CD4-positive, alpha-beta memory T cell (primary cell): ENCODE measurements at regions of chr11 and their contacts with region 1.

Region 1: GRCh38 chr11:17077520-17078401 is at the start of gene RPS13:
- DNase-seq: peak; percentile 90 to 96 (median 94)
- H3K4me3 ChIP-seq: peak within 1 kb of the TSS; percentile 93 to 94
- H3K4me3 Mint-ChIP-seq: peak within 1 kb of the TSS; percentile 95 to 99 (median 99)
- H3K27ac ChIP-seq: peak within 1 kb of the TSS; percentile 87
- H3K27ac Mint-ChIP-seq: peak within 1 kb of the TSS; percentile 96 to 99 (median 98)
- H3K4me1 ChIP-seq: peaks cover 39% of the 10 kb centered on the region
- H3K4me1 Mint-ChIP-seq: peaks cover 17 to 53% (median 38%) of the 10 kb centered on the region in 4 donors
- H3K27me3 ChIP-seq: no peaks in the 10 kb centered on the region
- H3K27me3 Mint-ChIP-seq: no peaks in the 10 kb centered on the region
- total RNA-seq, gene RPS13: 2,047 to 2,133 TPM

Region 2: GRCh38 chr11:17014838-17015626 is 62.7 kb before region 1 on chr11:
- CTCF ChIA-PET with region 1: no interaction called
- POLR2A ChIA-PET with region 1: interaction called, 7 read pairs
- intact Hi-C with region 1: loop called (anchors 2 kb)
- DNase-seq: peak in 4 of 5 donors; percentile 11 to 36 (median 16)
- H3K4me3 ChIP-seq: peak overlapping the region; percentile 4 to 29
- H3K4me3 Mint-ChIP-seq: peak overlapping the region; percentile 89 to 99 (median 95)
- H3K27ac ChIP-seq: no peak overlapping the region
- H3K27ac Mint-ChIP-seq: peak overlapping the region; percentile 14 to 79 (median 65)
- H3K4me1 ChIP-seq: peaks cover 7% of the 10 kb centered on the region
- H3K4me1 Mint-ChIP-seq: peaks cover 4 to 8% (median 5%) of the 10 kb centered on the region in 4 donors
- H3K27me3 ChIP-seq: peaks cover 7% of the 10 kb centered on the region
- H3K27me3 Mint-ChIP-seq: peaks cover 7 to 8% of the 10 kb centered on the region in 2 donors

Region 3: DNA sequence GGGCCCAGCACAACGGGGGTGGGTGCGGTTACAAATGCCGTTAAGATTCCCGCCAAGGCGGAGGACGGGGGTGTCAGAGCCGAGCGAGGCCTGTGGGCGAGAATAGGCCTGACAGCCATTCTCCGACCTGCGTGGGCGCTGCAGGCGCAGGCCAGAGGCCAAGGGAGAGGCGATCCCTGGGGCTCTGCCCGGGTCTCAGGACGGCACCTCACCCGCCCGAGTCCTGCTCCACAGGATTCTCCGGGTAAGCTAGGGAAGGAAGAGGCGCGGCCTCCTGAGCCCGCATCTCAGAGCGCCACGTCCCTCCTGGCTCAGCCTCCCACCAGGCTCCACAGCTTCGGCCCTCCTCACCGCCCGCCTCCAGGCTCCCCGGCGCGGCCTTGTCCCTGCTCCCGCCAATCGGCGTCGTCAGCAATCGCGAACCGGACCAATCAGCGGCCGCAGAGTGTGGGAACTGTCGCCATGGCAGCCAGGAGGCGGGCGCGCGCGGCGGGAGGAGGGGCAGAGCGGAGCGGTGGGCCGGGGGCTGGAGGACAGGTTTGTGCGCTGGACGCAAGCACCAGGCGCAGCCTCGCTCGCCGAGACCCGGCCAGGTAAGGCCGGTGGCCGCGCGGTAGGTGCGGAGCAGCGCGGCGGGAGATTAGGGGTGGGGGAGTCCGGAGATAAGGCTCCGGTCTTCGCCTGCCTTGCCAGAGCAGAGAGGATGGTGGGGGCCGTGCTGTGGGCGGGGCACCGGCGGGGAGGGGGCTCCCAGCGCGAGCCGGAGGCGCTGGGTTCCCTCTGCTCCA is 198.7 kb after region 1 on chr11 and contains the start of gene NUCB2:
- CTCF ChIA-PET with region 1: no interaction called
- POLR2A ChIA-PET with region 1: interaction called, 3 read pairs
- intact Hi-C with region 1: loop called (anchors 2 kb)
- DNase-seq: peak; percentile 93 to 95 (median 93)
- H3K4me3 ChIP-seq: peak within 1 kb of the TSS; percentile 71 to 89
- H3K4me3 Mint-ChIP-seq: peak within 1 kb of the TSS; percentile 80 to 97 (median 88)
- H3K27ac ChIP-seq: peak within 1 kb of the TSS; percentile 82
- H3K27ac Mint-ChIP-seq: peak within 1 kb of the TSS; percentile 75 to 97 (median 95)
- H3K4me1 ChIP-seq: peaks cover 36% of the 10 kb centered on the region
- H3K4me1 Mint-ChIP-seq: peaks cover 18 to 45% (median 31%) of the 10 kb centered on the region in 4 donors
- H3K27me3 ChIP-seq: no peaks in the 10 kb centered on the region
- H3K27me3 Mint-ChIP-seq: no peaks in the 10 kb centered on the region
- total RNA-seq, gene NUCB2: 53.2 to 57.6 TPM

Region 4: GRCh38 chr11:17389211-17389956 is 311.6 kb after region 1 on chr11:
- CTCF ChIA-PET with region 1: no interaction called
- POLR2A ChIA-PET with region 1: no interaction called
- intact Hi-C with region 1: loop called (anchors 2 kb)
- DNase-seq: peak; percentile 76 to 82 (median 77)
- H3K4me3 ChIP-seq: peak overlapping the region; percentile 17 to 54
- H3K4me3 Mint-ChIP-seq: peak overlapping the region; percentile 77 to 90 (median 84)
- H3K27ac ChIP-seq: no peak overlapping the region
- H3K27ac Mint-ChIP-seq: peak overlapping the region in 6 of 7 donors; percentile 36 to 68 (median 39)
- H3K4me1 ChIP-seq: peaks cover 5% of the 10 kb centered on the region
- H3K4me1 Mint-ChIP-seq: peaks cover 0 to 8% (median 3%) of the 10 kb centered on the region in 4 donors
- H3K27me3 ChIP-seq: no peaks in the 10 kb centered on the region
- H3K27me3 Mint-ChIP-seq: peaks cover 0 to 2% of the 10 kb centered on the region in 2 donors